ENCODE measurements at regions of chr17 and their contacts with region 1.

Region 1: GRCh38 chr17:77772461-77772897 is 186.0 kb upstream of the TNRC6C start:
- DNase-seq: peak; percentile 35 to 56 (median 42)
- H3K4me3 ChIP-seq: no peak overlapping the region
- H3K4me3 Mint-ChIP-seq: no peak overlapping the region
- H3K27ac ChIP-seq: no peak overlapping the region
- H3K27ac Mint-ChIP-seq: no peak overlapping the region
- H3K4me1 ChIP-seq: no peaks in the 10 kb centered on the region
- H3K4me1 Mint-ChIP-seq: peaks cover 3% of the 10 kb centered on the region
- H3K27me3 ChIP-seq: no peaks in the 10 kb centered on the region
- H3K27me3 Mint-ChIP-seq: peaks cover 8 to 20% (median 14%) of the 10 kb centered on the region in 3 donors
- CTCF ChIP-seq: peak; percentile 79

Region 2: DNA sequence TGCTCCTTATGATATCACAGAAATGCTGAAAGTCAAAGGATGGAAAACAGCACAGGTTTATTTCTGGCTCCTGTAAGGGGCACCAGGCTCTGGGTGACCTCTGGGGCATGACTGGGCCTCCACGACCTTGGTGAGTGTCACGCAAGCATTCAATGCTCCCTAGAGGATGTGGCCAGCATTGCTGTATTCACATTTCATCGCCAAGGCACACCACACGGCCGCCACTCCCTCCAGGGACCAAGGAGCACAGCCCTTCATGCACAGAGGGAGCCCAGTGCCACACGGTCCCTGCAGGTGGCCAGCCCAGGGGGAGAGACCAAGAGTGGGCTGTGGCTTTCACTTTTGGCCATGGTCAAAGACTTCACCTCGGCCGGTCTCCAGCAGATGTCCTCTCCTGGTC is 48.6 kb after region 1 on chr17:
- intact Hi-C with region 1: no loop called
- DNase-seq: no peak
- H3K4me3 ChIP-seq: no peak overlapping the region
- H3K4me3 Mint-ChIP-seq: no peak overlapping the region
- H3K27ac ChIP-seq: no peak overlapping the region
- H3K27ac Mint-ChIP-seq: no peak overlapping the region
- H3K4me1 ChIP-seq: no peaks in the 10 kb centered on the region
- H3K4me1 Mint-ChIP-seq: no peaks in the 10 kb centered on the region
- H3K27me3 ChIP-seq: peaks cover 0 to 2% of the 10 kb centered on the region in 2 donors
- H3K27me3 Mint-ChIP-seq: peaks cover 3 to 13% (median 6%) of the 10 kb centered on the region in 3 donors
- CTCF ChIP-seq: no peak

Region 3: DNA sequence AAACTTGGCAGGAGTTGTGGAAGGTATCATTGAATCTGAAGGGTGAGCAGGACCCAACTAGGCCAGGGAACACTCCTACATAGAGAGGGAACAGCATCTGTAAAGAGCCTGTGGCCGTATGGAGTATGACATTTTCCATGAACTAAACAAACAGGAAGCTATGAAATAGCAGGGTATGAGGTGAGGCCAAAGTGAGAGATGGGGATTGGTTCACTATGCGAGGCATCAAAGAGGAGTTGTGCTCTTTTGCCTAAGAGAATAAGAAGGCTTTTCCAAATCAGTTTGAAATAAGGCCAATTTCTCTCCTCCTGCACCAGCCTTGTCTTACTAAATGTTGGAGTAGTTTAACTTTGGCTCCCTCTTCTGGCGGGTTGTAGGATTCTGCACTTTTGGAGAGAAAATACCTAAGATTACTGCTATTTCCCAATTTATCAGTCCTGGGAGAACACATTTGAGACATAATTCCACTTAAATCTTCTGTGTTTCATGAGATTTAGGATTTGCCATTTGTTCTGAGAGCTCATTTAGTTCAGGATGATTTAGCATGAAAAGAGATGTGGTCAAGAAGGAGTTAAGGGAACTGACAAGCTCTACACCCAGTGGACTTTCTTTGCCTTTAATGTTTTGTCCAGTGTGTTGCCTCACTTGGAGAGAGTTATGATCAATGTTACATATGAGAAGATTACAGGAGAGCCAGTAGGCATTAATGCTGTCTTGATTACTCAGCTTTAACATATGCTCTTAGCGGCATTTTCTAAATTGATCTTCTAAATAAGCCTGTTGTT is 241.4 kb after region 1 on chr17:
- intact Hi-C with region 1: loop called (anchors 1 to 2 kb)
- DNase-seq: peak; percentile 32 to 54 (median 50)
- H3K4me3 ChIP-seq: no peak overlapping the region
- H3K4me3 Mint-ChIP-seq: no peak overlapping the region
- H3K27ac ChIP-seq: no peak overlapping the region
- H3K27ac Mint-ChIP-seq: peak overlapping the region in 1 of 7 donors; percentile 2
- H3K4me1 ChIP-seq: no peaks in the 10 kb centered on the region
- H3K4me1 Mint-ChIP-seq: peaks cover 12% of the 10 kb centered on the region
- H3K27me3 ChIP-seq: no peaks in the 10 kb centered on the region
- H3K27me3 Mint-ChIP-seq: no peaks in the 10 kb centered on the region
- CTCF ChIP-seq: peak; percentile 87

Measured in CD14-positive monocyte (primary cell).